Common myeloid progenitor, CD34-positive (primary cell): ENCODE measurements at regions of chr5 and their contacts with region 1.

Region 1: GRCh38 chr5:80093796-80094195 is 58.6 kb downstream of the THBS4 start:
- DNase-seq: no peak
- H3K4me3 ChIP-seq: no peak overlapping the region
- H3K27ac ChIP-seq: no peak overlapping the region
- H3K4me1 ChIP-seq: peaks cover 0 to 10% (median 4%) of the 10 kb centered on the region in 4 experiments
- H3K27me3 ChIP-seq: no peaks in the 10 kb centered on the region

Region 2: GRCh38 chr5:79990598-79991507 is 102.9 kb before region 1 on chr5 and contains the start of gene MTX3:
- CTCF ChIA-PET with region 1: no interaction called
- POLR2A ChIA-PET with region 1: no interaction called
- DNase-seq: peak; percentile 76 to 86 (median 79)
- H3K4me3 ChIP-seq: peak within 1 kb of the TSS; percentile 60 to 88 (median 81)
- H3K27ac ChIP-seq: no peak within 1 kb of the TSS
- H3K4me1 ChIP-seq: peaks cover 2 to 15% (median 8%) of the 10 kb centered on the region in 4 experiments
- H3K27me3 ChIP-seq: peaks cover 0 to 3% (median 0%) of the 10 kb centered on the region in 5 experiments

Region 3: DNA sequence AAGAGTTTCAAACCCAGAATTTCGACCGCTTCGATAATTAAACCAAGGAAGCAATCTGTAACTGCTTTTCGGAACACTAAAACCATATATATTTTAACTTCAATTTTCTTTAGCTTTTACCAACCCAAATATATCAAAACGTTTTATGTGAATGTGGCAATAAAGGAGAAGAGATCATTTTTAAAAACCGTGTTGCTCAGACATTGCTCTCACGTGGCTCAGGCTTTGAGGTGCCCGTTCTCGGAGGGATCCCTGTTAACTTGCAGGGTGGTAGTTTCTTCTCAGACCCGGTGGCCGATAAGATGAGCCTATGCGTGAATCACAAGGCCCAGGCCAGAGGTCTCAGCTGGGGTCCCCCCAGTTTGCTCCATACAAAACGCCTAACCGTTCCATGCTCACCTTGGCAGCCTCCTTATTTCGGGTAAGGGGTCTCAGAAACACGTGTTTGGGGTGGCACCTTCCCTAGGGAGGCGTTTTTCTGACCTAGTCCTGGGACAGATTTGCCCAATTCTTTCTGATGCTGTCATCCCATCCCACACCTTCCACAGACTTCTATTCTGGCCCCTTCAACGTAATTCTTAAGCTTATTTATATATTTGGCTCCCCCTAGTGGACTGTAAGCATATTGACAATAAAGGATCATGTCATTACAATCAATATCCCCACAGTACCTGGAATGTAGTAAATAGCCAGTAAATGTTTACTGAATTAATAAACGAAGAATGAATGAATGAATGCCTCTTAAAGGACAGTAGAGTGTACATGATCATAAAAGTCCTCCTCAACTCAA is 10.5 kb before region 1 on chr5:
- CTCF ChIA-PET with region 1: interaction called, 14 read pairs
- POLR2A ChIA-PET with region 1: no interaction called
- DNase-seq: peak; percentile 54 to 74 (median 66)
- H3K4me3 ChIP-seq: peak overlapping the region in 6 of 7 experiments; percentile 2 to 74 (median 33)
- H3K27ac ChIP-seq: no peak overlapping the region
- H3K4me1 ChIP-seq: peaks cover 0 to 8% (median 5%) of the 10 kb centered on the region in 4 experiments
- H3K27me3 ChIP-seq: no peaks in the 10 kb centered on the region

Region 4: GRCh38 chr5:80275347-80275746 is 181.6 kb after region 1 on chr5:
- CTCF ChIA-PET with region 1: interaction called, 110 read pairs
- POLR2A ChIA-PET with region 1: no interaction called
- DNase-seq: peak; percentile 39 to 61 (median 60)
- H3K4me3 ChIP-seq: no peak overlapping the region
- H3K27ac ChIP-seq: no peak overlapping the region
- H3K4me1 ChIP-seq: peaks cover 0 to 2% (median 0%) of the 10 kb centered on the region in 4 experiments
- H3K27me3 ChIP-seq: no peaks in the 10 kb centered on the region

Region 5: DNA sequence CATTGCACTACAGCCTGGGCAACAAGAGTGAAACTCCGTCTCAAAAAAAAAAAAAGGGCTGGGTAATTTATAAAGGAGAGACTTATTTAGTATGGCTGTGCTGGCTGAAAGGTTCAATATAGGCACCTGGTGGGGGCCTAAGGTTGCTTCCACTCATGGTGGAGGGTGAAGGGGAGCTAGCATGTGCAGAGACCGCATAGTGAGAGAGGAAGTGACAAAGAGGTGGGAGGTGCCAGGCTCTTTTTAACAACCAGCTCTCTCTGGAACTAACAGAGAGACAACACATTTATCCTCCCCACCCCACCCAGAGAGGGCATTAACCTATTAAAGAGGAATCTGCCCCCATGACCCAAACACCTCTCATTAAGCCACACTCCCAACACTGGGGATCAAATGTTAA is 190.9 kb after region 1 on chr5:
- CTCF ChIA-PET with region 1: interaction called, 110 read pairs
- POLR2A ChIA-PET with region 1: no interaction called
- DNase-seq: peak in 2 of 3 donors; percentile 20 to 28
- H3K4me3 ChIP-seq: no peak overlapping the region
- H3K27ac ChIP-seq: no peak overlapping the region
- H3K4me1 ChIP-seq: peaks cover 0 to 4% (median 0%) of the 10 kb centered on the region in 4 experiments
- H3K27me3 ChIP-seq: no peaks in the 10 kb centered on the region

Region 6: DNA sequence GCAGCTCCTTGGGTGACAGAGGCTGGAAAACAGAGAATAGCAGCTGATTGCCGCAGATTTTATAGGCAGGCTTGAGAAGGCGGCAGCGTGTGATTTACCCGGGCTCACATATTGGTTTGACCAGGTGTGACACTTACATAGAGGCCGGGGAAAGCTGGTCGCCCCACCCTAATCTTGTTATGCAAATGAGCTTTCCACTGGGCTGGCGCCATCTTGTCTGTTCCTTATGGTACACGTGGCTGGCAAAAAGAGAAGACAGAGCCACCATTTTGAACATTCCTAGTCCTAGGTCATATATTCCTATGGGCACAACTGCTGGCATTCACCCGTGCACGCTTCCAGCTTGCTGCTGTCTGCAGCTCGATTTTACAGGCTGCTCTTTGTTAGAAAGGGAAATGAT is 214.7 kb after region 1 on chr5:
- CTCF ChIA-PET with region 1: interaction called, 68 read pairs
- POLR2A ChIA-PET with region 1: interaction called, 3 read pairs
- DNase-seq: no peak
- H3K4me3 ChIP-seq: no peak overlapping the region
- H3K27ac ChIP-seq: no peak overlapping the region
- H3K4me1 ChIP-seq: no peaks in the 10 kb centered on the region
- H3K27me3 ChIP-seq: no peaks in the 10 kb centered on the region

Region 7: GRCh38 chr5:80668016-80668969 is 574.5 kb after region 1 on chr5:
- CTCF ChIA-PET with region 1: interaction called, 10 read pairs
- POLR2A ChIA-PET with region 1: no interaction called
- DNase-seq: no peak
- H3K4me3 ChIP-seq: no peak overlapping the region
- H3K27ac ChIP-seq: no peak overlapping the region
- H3K4me1 ChIP-seq: no peaks in the 10 kb centered on the region
- H3K27me3 ChIP-seq: no peaks in the 10 kb centered on the region